Activated naive CD4-positive, alpha-beta T cell treated with anti-CD3 and anti-CD28 coated beads for 36 hours (primary cell): ENCODE measurements at regions of chr11 and their contacts with region 1.

Region 1: DNA sequence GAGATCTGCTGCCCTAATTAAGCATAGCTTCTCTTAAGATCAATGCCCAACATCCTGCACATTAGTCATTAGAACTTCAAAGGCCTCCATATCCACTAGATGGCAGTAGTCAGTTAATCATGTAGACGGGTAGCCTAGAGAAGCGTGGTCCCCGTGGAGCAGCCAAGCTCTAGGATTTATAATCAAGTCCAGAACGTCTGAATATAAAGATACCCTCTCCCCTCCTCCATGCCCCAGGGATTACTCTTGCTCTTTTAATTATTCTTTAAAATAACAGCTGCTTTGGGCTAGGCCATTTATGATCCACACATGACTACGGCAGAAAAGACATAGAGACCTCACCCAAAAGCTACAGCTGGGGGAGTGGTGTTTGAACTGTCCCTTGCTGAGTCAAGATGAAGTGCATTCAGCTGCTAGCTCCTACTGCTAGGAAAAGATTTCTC is 327.6 kb upstream of the PLET1 start:
- DNase-seq: peak; percentile 58
- H3K4me3 Mint-ChIP-seq: no peak overlapping the region
- H3K27ac Mint-ChIP-seq: no peak overlapping the region
- H3K4me1 Mint-ChIP-seq: no peaks in the 10 kb centered on the region
- H3K27me3 Mint-ChIP-seq: no peaks in the 10 kb centered on the region

Region 2: DNA sequence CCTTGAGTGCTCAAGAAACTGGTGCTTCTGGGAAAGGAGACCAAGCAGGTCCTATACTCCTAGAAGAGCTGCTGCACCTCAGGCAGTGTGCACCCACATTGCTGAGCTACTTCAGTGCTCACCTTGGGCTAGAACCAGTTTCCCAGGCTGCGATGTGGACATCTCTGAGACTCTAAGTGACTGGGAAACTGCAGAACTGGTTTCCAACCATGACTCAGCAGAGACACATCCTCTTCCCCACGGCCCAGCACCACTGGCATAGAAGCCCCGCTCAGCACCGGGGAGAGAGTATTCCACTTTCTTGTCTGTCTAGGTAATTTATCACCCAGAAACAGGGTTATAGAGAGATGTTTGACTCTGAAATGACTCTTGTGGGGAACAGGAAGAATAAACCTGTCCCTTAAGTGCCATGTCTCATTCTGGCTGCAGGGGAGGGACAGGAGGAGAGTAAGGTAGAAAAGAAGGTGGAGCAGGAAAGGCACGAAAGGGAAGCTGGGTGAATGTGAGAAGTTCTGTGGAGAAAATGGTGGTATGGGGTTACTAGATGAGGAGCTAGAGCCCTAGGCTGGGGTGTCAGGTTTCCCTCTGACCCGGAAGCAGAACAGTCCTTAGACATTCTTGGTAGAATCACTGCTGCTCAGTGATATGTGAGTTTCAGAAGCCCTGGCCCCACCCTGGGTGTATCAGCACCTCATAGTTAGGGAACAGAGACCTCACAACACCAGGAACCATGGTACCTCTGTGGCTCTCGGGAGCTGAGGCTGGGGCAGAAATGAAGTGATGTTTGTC is 32.5 kb after region 1 on chr11:
- CTCF ChIA-PET with region 1: no interaction called
- intact Hi-C with region 1: no loop called
- DNase-seq: no peak
- H3K4me3 Mint-ChIP-seq: no peak overlapping the region
- H3K27ac Mint-ChIP-seq: no peak overlapping the region
- H3K4me1 Mint-ChIP-seq: no peaks in the 10 kb centered on the region
- H3K27me3 Mint-ChIP-seq: peaks cover 9% of the 10 kb centered on the region

Region 3: DNA sequence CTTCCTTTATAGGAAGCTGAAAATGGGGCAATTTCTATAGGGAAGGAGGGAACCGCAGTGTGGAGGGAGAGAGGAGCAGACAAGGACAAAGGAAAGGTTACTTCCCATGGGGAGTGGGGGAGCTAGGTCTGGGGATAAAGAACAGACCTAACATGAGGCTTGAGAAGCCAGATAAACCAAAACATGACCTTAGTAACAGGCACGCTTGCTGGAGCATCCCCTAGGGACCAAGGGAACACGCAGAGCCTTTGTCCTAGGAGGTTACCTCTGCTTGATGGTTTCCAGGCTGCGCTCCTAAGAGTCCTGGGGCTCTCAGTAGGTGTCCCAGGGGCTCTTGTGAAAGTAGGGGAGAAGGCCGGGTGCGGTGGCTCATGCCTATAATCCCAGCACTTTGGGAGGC is 101.6 kb after region 1 on chr11:
- CTCF ChIA-PET with region 1: no interaction called
- intact Hi-C with region 1: no loop called
- DNase-seq: no peak
- H3K4me3 Mint-ChIP-seq: no peak overlapping the region
- H3K27ac Mint-ChIP-seq: no peak overlapping the region
- H3K4me1 Mint-ChIP-seq: no peaks in the 10 kb centered on the region
- H3K27me3 Mint-ChIP-seq: peaks cover 4% of the 10 kb centered on the region

Region 4: DNA sequence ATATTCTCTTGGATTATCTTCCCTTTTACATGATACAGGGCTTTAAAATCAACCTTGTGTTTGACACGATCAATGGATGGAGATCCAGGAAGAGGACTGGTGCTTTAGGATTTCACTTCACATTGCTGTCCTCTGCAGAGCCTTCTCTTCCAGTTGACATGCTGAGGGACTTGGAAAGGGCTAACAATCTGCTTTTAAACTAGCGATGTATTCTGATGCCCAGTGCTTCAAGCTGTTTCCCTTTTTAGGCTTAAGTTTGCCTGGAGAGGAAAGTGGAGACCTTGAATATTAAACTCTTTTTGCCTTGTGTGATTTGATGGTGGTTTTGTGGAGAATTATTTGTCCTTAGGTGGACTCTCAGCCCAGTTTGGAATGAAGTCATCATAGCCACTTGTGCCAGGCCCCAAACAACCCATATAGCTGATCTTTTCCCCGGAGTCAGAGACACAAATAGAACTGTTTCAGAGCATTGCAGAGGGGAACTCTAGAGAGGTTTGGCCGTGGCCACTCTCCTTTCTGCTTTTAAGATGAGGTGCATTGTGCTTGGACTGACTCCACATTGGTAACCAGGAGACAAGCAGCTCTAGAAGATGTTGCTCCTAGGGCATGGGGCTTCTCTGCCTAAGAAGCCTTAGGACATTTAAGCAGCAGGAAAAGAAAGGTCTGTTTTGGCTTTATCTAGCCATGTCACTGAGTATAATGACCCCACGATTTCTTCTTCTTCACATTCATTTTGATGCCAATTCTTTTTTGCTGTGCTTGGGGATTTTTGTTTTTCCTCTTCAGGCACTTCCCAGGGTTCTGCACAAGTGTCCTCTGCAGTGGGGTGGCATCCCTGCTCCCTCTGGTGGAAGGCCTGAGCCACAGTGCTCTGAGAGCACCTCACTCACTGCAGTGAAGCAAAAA is 525.8 kb after region 1 on chr11:
- CTCF ChIA-PET with region 1: interaction called, 3 read pairs
- intact Hi-C with region 1: loop called (anchors 2 kb)
- DNase-seq: peak; percentile 17
- H3K4me3 Mint-ChIP-seq: no peak overlapping the region
- H3K27ac Mint-ChIP-seq: no peak overlapping the region
- H3K4me1 Mint-ChIP-seq: no peaks in the 10 kb centered on the region
- H3K27me3 Mint-ChIP-seq: peaks cover 7% of the 10 kb centered on the region